Adrenal gland (tissue), 19 donors: ENCODE measurements at regions of chr7 and their contacts with region 1.

Region 1: GRCh38 chr7:22559829-22560489 is 60.0 kb upstream of the STEAP1B start:
- DNase-seq: peak; percentile 59 to 86 (median 74)
- H3K4me3 ChIP-seq: no peak overlapping the region
- H3K27ac ChIP-seq: no peak overlapping the region
- H3K4me1 ChIP-seq: peaks cover 4 to 16% of the 10 kb centered on the region in 2 donors
- H3K27me3 ChIP-seq: no peaks in the 10 kb centered on the region
- CTCF ChIP-seq: peak; percentile 78 to 99 (median 92)
- POLR2A ChIP-seq: no peak

Region 2: DNA sequence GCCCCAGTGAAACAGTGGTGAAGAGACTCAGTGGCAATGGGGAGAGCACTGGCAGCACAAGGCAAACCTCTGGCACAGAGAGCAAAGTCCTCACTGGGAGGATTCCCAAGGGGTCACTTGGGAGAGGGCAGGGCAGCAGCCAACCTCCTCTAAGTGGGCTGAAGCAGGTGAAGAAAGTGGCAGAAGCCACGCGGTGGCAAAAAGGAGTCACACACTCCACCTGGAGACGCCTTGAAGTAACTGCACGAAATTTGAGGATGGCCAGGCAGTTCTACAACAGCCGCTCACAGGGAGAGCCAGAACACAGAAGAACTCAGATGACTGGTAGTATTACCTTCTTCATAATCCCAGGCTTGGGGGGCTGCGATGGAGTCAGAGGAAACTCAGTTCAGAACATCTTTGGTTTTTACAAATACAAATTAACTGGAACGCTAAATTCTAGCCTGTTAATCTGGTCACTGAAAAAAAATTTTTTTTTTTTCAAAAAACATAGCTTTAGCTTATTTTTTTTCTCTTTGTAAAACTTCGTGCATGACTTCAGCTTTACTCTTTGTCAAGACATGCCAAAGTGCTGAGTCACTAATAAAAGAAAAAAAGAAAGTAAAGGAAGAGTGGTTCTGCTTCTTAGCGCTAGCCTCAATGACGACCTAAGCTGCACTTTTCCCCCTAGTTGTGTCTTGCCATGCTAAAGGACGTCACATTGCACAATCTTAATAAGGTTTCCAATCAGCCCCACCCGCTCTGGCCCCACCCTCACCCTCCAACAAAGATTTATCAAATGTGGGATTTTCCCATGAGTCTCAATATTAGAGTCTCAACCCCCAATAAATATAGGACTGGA is 166.6 kb after region 1 on chr7:
- intact Hi-C with region 1: loop called (anchors 5 kb)
- DNase-seq: peak in 5 of 7 donors; percentile 32 to 61 (median 36)
- H3K4me3 ChIP-seq: peak overlapping the region in 2 of 4 donors; percentile 24 to 43
- H3K27ac ChIP-seq: peak overlapping the region in 4 of 5 donors; percentile 8 to 84 (median 48)
- H3K4me1 ChIP-seq: peaks cover 4 to 27% of the 10 kb centered on the region in 2 donors
- H3K27me3 ChIP-seq: no peaks in the 10 kb centered on the region
- CTCF ChIP-seq: peak in 5 of 6 experiments; percentile 12 to 51 (median 40)
- POLR2A ChIP-seq: no peak

Region 3: GRCh38 chr7:22782616-22783232 is 222.8 kb after region 1 on chr7:
- intact Hi-C with region 1: loop called in 1 of 2 experiments (anchors 5 kb)
- DNase-seq: peak; percentile 54 to 84 (median 79)
- H3K4me3 ChIP-seq: no peak overlapping the region
- H3K27ac ChIP-seq: no peak overlapping the region
- H3K4me1 ChIP-seq: no peaks in the 10 kb centered on the region
- H3K27me3 ChIP-seq: no peaks in the 10 kb centered on the region
- CTCF ChIP-seq: peak; percentile 44 to 69 (median 60)
- POLR2A ChIP-seq: no peak

Region 4: GRCh38 chr7:23055582-23056178 is 495.7 kb after region 1 on chr7:
- intact Hi-C with region 1: loop called (anchors 5 to 10 kb)
- DNase-seq: peak; percentile 42 to 82 (median 56)
- H3K4me3 ChIP-seq: no peak overlapping the region
- H3K27ac ChIP-seq: no peak overlapping the region
- H3K4me1 ChIP-seq: no peaks in the 10 kb centered on the region
- H3K27me3 ChIP-seq: no peaks in the 10 kb centered on the region
- CTCF ChIP-seq: peak; percentile 47 to 93 (median 88)
- POLR2A ChIP-seq: no peak